ENCODE measurements at regions of chr17 and their contacts with region 1.

Region 1: GRCh38 chr17:45640141-45640850 is 143.8 kb upstream of the CRHR1 start:
- DNase-seq: peak; percentile 77 to 86 (median 79)
- H3K4me3 ChIP-seq: no peak overlapping the region
- H3K27ac ChIP-seq: no peak overlapping the region
- H3K4me1 ChIP-seq: peaks cover under 1 to 7% (median 5%) of the 10 kb centered on the region in 4 experiments
- H3K27me3 ChIP-seq: no peaks in the 10 kb centered on the region

Region 2: GRCh38 chr17:45688353-45688752 is 48.1 kb after region 1 on chr17:
- CTCF ChIA-PET with region 1: no interaction called
- POLR2A ChIA-PET with region 1: no interaction called
- DNase-seq: no peak
- H3K4me3 ChIP-seq: no peak overlapping the region
- H3K27ac ChIP-seq: no peak overlapping the region
- H3K4me1 ChIP-seq: no peaks in the 10 kb centered on the region
- H3K27me3 ChIP-seq: peaks cover 0 to 36% (median 24%) of the 10 kb centered on the region in 5 experiments

Region 3: DNA sequence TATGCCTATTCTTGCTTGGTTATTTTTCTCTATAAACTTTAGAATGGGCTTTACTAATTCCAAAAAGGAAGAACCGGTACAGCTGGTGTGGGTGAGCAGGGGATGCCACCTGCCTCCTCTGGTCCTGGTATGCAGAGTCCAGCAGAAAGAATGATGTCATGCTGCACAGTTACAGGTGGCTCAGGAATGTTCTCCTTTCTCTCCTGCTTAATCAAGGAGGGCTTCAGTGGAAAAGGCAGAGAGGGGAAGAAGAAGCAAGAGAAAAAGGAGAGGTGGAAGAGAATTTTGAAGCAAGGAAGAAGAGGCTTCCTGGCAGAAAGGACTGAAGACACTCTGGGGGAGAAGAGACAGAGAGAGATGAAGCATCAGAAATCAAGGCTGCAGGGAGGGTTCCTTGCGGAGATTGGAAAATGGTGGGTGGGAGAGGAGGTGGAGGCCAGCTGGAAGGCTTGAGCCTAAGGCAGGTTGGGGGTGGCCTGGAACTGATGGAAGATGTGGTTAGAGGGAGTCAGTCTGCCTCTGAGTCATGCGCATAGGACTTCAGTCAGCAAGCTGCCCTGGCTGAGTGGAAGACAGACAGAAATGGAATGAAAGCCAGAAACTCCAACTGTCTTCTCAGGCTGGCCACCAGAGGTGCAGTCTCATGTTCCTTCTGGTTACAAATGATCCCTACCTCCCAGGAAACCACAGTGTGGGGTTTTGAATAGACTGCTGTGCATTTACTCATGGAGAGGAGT is 79.2 kb after region 1 on chr17:
- CTCF ChIA-PET with region 1: no interaction called
- POLR2A ChIA-PET with region 1: no interaction called
- DNase-seq: peak; percentile 15 to 45 (median 44)
- H3K4me3 ChIP-seq: no peak overlapping the region
- H3K27ac ChIP-seq: no peak overlapping the region
- H3K4me1 ChIP-seq: no peaks in the 10 kb centered on the region
- H3K27me3 ChIP-seq: peaks cover 1 to 30% (median 9%) of the 10 kb centered on the region in 5 experiments

Region 4: DNA sequence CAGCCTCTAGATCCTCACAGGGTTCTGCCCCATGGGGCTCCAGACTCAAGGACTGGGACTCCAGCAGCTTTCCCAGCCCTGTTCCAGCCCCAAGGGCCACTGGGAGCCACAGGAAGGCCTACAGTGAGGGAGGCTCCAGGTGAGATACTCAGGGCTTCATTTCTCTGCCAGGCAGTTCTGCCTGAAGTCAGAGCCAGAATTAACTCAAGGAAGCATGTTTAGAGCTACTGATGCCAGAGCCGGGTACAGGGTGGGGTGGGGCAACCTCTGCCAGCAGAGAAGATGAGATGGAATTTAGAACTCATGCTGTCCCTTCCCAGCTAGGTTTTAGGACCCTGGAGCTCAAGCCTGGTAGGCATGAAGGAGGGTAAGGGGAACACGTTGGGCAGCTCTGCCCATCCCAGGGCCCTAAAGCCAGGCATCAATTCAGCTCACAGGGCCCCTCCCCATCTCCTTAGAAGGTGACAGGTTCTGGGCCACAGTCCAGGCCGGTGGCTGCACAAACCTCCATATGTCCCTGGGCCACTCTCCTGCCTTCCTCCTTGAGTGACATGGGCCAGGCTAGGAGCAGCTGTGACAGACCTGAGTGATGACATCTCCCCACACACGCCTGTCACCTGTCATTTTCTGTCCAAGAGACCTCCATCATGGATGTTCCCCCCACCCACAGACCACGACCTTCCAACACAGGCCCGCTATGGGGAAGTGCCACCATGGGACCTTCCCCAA is 179.9 kb after region 1 on chr17:
- CTCF ChIA-PET with region 1: interaction called, 10 read pairs
- POLR2A ChIA-PET with region 1: no interaction called
- DNase-seq: no peak
- H3K4me3 ChIP-seq: no peak overlapping the region
- H3K27ac ChIP-seq: no peak overlapping the region
- H3K4me1 ChIP-seq: peaks cover 0 to 4% (median 1%) of the 10 kb centered on the region in 4 experiments
- H3K27me3 ChIP-seq: peaks cover 0 to 6% (median 0%) of the 10 kb centered on the region in 5 experiments

Region 5: DNA sequence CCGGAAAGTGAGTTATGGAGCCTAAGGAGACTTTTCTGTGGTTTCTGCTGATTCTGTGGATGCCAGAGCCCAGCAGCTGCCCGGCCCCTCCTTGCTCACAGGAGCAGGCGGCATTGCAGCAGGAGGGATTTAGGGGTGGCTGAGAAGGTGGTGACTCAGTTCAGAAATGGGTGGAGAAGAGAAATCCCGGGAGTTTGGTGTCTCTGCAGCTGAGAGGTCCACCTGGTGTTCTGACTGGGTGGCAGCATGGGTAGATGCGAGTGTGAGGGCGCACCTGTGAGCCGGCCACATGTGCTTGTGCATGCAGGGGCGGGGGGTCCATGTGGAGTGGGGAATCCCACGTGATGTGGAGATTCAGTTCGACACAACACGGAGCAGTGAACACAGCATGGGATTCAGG is 188.3 kb after region 1 on chr17:
- CTCF ChIA-PET with region 1: interaction called, 49 read pairs
- POLR2A ChIA-PET with region 1: interaction called, 3 read pairs
- DNase-seq: peak in 1 of 3 donors; percentile 28
- H3K4me3 ChIP-seq: no peak overlapping the region
- H3K27ac ChIP-seq: no peak overlapping the region
- H3K4me1 ChIP-seq: peaks cover 0 to 23% (median 11%) of the 10 kb centered on the region in 4 experiments
- H3K27me3 ChIP-seq: no peaks in the 10 kb centered on the region

Region 6: GRCh38 chr17:45834471-45835396 is 194.4 kb after region 1 on chr17:
- CTCF ChIA-PET with region 1: interaction called, 49 read pairs
- POLR2A ChIA-PET with region 1: no interaction called
- DNase-seq: no peak
- H3K4me3 ChIP-seq: no peak overlapping the region
- H3K27ac ChIP-seq: no peak overlapping the region
- H3K4me1 ChIP-seq: no peaks in the 10 kb centered on the region
- H3K27me3 ChIP-seq: no peaks in the 10 kb centered on the region

Region 7: DNA sequence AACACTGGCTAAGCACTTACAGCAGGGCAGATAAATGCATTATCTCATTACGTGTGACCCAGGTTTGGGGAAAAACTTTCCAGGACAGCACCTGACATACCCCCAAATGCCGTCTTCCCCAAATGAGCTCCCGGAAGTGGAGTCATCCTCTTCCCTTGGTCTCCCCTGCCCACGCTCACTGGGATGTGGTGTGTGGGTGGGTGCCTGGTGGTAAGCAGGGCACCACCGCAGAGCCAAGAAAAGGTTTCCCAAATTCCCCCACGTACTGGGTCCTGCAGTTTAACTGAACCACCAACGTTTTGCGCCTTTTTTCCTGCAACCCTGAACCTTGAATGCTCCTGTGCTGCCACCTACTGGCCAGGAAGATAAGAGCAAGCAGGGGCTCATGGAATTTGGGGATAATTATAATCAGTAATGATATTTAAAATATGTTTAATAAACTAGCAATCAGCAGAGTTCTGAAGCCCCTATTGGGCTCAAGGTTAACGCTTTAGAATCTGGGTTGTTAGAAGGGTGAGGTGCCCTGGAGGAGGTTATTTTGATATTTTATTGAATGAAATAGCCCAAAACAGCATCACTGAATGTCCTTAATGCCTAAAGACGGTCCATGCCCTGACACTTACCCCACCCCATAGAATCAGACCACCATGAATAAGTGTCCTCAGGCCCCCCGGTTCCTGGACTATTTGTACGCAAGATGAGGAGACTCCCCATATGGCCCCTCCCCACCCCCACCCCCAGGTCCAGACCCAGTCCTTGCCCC is 212.4 kb after region 1 on chr17:
- CTCF ChIA-PET with region 1: interaction called, 11 read pairs
- POLR2A ChIA-PET with region 1: interaction called, 3 read pairs
- DNase-seq: peak; percentile 58 to 80 (median 72)
- H3K4me3 ChIP-seq: no peak overlapping the region
- H3K27ac ChIP-seq: no peak overlapping the region
- H3K4me1 ChIP-seq: peaks cover 0 to 3% (median 0%) of the 10 kb centered on the region in 4 experiments
- H3K27me3 ChIP-seq: peaks cover 0 to 22% (median 10%) of the 10 kb centered on the region in 5 experiments

Measured in common myeloid progenitor, CD34-positive (primary cell).